ENCODE measurements at regions of chr7 and their contacts with region 1.

Region 1: DNA sequence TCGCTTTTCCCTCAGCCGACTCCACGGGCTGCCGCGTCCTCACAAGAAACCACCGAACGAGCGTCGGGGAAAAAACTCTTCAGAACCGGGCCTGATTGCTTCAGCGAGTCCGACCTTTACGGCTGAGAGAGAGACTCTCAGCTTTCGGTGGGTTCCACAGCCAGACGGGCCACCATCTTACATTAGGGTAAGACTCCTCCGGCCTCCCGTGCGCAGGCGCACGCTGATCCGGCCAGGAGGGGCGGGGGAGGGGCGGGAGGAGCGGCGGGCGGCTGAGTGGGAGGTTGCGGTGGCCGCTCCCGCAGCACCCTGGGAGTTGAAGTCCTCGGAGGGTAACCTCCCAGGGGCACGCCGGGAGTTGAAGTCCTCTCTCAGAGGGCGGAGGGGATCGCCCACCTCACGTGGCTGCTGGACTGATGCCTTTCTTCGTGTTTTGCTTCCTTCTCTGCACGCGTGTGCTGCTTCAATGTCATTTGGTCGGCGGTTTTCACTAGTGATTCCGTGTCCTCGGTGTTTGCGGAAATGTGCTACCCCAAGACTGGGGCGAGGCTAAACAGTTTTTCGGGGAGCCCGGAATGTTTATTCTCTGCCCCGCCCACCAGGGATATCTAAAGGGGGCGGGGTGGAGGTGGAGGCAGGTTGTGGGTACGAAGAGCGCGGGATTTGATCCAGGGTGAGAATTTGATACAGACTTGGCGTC is at the start of gene CNOT4:
- DNase-seq: peak; percentile 96
- ATAC-seq: peak; percentile 98 to 100 (median 99)
- H3K4me3 ChIP-seq: peak within 1 kb of the TSS; percentile 66 to 86 (median 80)
- H3K27ac ChIP-seq: peak within 1 kb of the TSS; percentile 64 to 96 (median 93)
- H3K4me1 ChIP-seq: peaks cover 0 to 38% (median 27%) of the 10 kb centered on the region in 9 donors
- H3K27me3 ChIP-seq: no peaks in the 10 kb centered on the region
- CTCF ChIP-seq: no peak
- total RNA-seq, gene CNOT4: 24.4 to 31.7 (median 27.8) TPM

Region 2: GRCh38 chr7:134276951-134277350 is 1233.1 kb before region 1 on chr7:
- intact Hi-C with region 1: no loop called
- DNase-seq: no peak
- ATAC-seq: no peak
- H3K4me3 ChIP-seq: no peak overlapping the region
- H3K27ac ChIP-seq: no peak overlapping the region
- H3K4me1 ChIP-seq: no peaks in the 10 kb centered on the region
- H3K27me3 ChIP-seq: peaks cover 0 to 8% (median 3%) of the 10 kb centered on the region in 7 donors
- CTCF ChIP-seq: no peak

Region 3: GRCh38 chr7:135414850-135415439 is 95.1 kb before region 1 on chr7:
- intact Hi-C with region 1: loop called in 1 of 10 experiments (anchors 10 kb)
- DNase-seq: peak in 1 of 2 donors; percentile 10
- ATAC-seq: no peak
- H3K4me3 ChIP-seq: no peak overlapping the region
- H3K27ac ChIP-seq: no peak overlapping the region
- H3K4me1 ChIP-seq: no peaks in the 10 kb centered on the region
- H3K27me3 ChIP-seq: no peaks in the 10 kb centered on the region
- CTCF ChIP-seq: peak in 7 of 9 donors; percentile 24 to 57 (median 45)

Region 4: GRCh38 chr7:135558337-135558767 is 48.3 kb after region 1 on chr7:
- intact Hi-C with region 1: loop called (anchors 2 to 5 kb)
- DNase-seq: peak; percentile 23 to 41
- ATAC-seq: peak; percentile 60 to 90 (median 73)
- H3K4me3 ChIP-seq: peak overlapping the region; percentile 68 to 89 (median 82)
- H3K27ac ChIP-seq: peak overlapping the region; percentile 92 to 98 (median 94)
- H3K4me1 ChIP-seq: peaks cover 0 to 31% (median 14%) of the 10 kb centered on the region in 9 donors
- H3K27me3 ChIP-seq: no peaks in the 10 kb centered on the region
- CTCF ChIP-seq: peak; percentile 21 to 71 (median 57)

Region 5: GRCh38 chr7:135645296-135645904 is 135.3 kb after region 1 on chr7:
- intact Hi-C with region 1: loop called in 1 of 10 experiments (anchors 10 kb)
- DNase-seq: peak in 1 of 2 donors; percentile 28
- ATAC-seq: peak in 6 of 8 donors; percentile 42 to 70 (median 46)
- H3K4me3 ChIP-seq: no peak overlapping the region
- H3K27ac ChIP-seq: no peak overlapping the region
- H3K4me1 ChIP-seq: no peaks in the 10 kb centered on the region
- H3K27me3 ChIP-seq: no peaks in the 10 kb centered on the region
- CTCF ChIP-seq: peak; percentile 43 to 76 (median 72)

Measured in heart right ventricle (tissue), 16 donors.